Naive thymus-derived CD4-positive, alpha-beta T cell (primary cell): ENCODE measurements at regions of chr12 and their contacts with region 1.

Region 1: GRCh38 chr12:14365294-14366208 is at the start of gene ATF7IP:
- DNase-seq: peak; percentile 91 to 98 (median 97)
- ATAC-seq: peak; percentile 93
- H3K4me3 ChIP-seq: peak within 1 kb of the TSS; percentile 83
- H3K4me3 Mint-ChIP-seq: peak within 1 kb of the TSS; percentile 78 to 97 (median 88)
- H3K27ac ChIP-seq: peak within 1 kb of the TSS; percentile 84
- H3K27ac Mint-ChIP-seq: peak within 1 kb of the TSS; percentile 88 to 98 (median 94)
- H3K4me1 ChIP-seq: peaks cover 13 to 20% of the 10 kb centered on the region in 2 donors
- H3K4me1 Mint-ChIP-seq: peaks cover 21 to 52% (median 34%) of the 10 kb centered on the region in 7 donors
- H3K27me3 ChIP-seq: no peaks in the 10 kb centered on the region
- H3K27me3 Mint-ChIP-seq: peaks cover 0 to 2% (median 0%) of the 10 kb centered on the region in 5 donors
- total RNA-seq, gene ATF7IP: 113 to 181 (median 144) TPM

Region 2: DNA sequence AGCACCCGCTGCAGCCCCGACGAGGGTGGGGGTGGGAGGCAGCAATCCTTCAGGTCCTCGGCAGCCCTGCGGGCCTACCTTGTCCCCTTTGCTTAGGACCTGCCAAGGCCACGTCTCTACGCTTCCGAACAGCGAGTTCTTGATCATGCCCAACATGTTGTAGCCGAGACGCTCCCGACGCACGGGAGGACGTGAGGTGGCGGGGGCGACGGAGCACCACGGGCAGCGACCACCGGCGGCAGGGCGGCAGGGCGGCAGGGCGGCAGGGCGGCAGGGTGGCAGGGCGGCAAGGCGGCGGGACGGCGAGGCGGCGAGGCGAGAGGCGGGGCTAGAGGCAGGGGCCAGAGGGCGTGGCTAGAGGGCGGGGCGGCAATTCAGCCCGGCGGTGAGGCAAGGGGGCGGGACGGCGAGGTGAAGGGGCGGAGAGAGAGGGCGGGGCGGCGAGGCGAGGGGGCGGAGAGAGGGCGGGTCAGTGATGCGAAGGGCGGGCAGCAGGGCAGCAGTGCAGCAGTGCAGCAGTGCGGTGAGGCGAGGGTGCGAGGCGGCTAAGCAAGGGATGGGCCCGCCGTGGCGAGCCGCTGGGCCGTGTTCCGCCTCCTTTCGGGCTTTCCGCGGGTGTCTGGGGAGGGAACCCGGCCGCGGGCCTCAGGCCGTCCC is 1365.5 kb before region 1 on chr12 and contains the start of gene HEBP1:
- CTCF ChIA-PET with region 1: no interaction called
- POLR2A ChIA-PET with region 1: interaction called, 3 read pairs
- intact Hi-C with region 1: loop called in 1 of 2 experiments (anchors 2 kb)
- DNase-seq: peak; percentile 86 to 99 (median 93)
- ATAC-seq: peak; percentile 97
- H3K4me3 ChIP-seq: peak within 1 kb of the TSS; percentile 74
- H3K4me3 Mint-ChIP-seq: peak within 1 kb of the TSS; percentile 90 to 98 (median 95)
- H3K27ac ChIP-seq: peak within 1 kb of the TSS; percentile 83
- H3K27ac Mint-ChIP-seq: peak within 1 kb of the TSS; percentile 53 to 96 (median 90)
- H3K4me1 ChIP-seq: peaks cover 8 to 23% of the 10 kb centered on the region in 2 donors
- H3K4me1 Mint-ChIP-seq: peaks cover 30 to 45% (median 35%) of the 10 kb centered on the region in 7 donors
- H3K27me3 ChIP-seq: peaks cover 0 to 5% of the 10 kb centered on the region in 2 donors
- H3K27me3 Mint-ChIP-seq: peaks cover 0 to 31% (median 0%) of the 10 kb centered on the region in 5 donors
- total RNA-seq, gene HEBP1: 10.9 to 23.4 (median 13.6) TPM

Region 3: DNA sequence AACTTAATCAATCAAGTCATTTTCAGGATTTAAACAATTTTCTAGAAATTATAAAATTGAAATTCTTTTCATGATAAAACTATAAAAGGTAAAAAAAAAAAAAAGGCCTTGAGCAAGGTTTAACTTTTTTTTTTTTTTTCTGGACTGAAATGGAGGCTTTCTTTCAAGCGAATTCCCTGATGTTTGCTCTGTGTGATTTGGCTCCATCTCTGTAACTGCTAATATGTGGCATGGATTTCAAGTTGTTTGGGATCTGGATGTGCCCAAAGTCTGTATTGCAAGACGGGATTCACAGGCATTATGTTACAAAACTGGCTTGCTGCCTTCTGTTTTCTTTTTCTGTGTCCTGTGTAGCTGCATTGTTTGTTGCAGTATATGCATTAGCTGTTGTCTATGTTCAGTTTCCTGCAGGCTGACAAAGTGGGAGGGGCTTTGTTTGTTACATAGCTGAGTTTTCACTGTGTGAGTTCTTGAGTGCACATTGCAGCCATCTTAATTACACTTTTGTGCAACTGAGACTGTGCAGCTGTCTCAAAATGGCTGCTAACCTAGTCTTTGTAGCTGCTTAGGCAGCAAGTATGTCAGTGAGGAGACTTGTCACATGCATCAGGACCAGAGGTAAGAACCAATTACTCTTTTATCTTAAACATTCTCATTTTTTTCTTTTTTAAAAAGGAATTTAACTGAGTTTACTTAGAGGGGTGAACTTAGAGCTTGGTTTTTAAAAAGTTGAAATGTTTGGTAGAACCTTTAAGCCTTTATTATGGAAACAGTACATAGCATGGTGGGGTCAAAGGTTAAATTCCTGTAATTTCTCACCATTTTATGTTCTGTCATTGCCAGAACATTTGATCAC is 19.5 kb after region 1 on chr12:
- CTCF ChIA-PET with region 1: interaction called, 33 read pairs
- POLR2A ChIA-PET with region 1: interaction called, 98 read pairs
- intact Hi-C with region 1: loop called (anchors 1 kb)
- DNase-seq: peak in 8 of 9 donors; percentile 47 to 84 (median 77)
- ATAC-seq: peak; percentile 96
- H3K4me3 ChIP-seq: peak overlapping the region; percentile 18
- H3K4me3 Mint-ChIP-seq: peak overlapping the region; percentile 65 to 85 (median 76)
- H3K27ac ChIP-seq: peak overlapping the region; percentile 71
- H3K27ac Mint-ChIP-seq: peak overlapping the region; percentile 86 to 95 (median 93)
- H3K4me1 ChIP-seq: peaks cover 32 to 49% of the 10 kb centered on the region in 2 donors
- H3K4me1 Mint-ChIP-seq: peaks cover 31 to 79% (median 68%) of the 10 kb centered on the region in 7 donors
- H3K27me3 ChIP-seq: no peaks in the 10 kb centered on the region
- H3K27me3 Mint-ChIP-seq: no peaks in the 10 kb centered on the region

Region 4: GRCh38 chr12:14454098-14454907 is 88.8 kb after region 1 on chr12:
- CTCF ChIA-PET with region 1: interaction called, 11 read pairs
- POLR2A ChIA-PET with region 1: interaction called, 3 read pairs
- intact Hi-C with region 1: loop called (anchors 1 kb)
- DNase-seq: peak in 7 of 9 donors; percentile 5 to 33 (median 25)
- ATAC-seq: peak; percentile 86
- H3K4me3 ChIP-seq: no peak overlapping the region
- H3K4me3 Mint-ChIP-seq: peak overlapping the region in 5 of 10 donors; percentile 1 to 32 (median 3)
- H3K27ac ChIP-seq: no peak overlapping the region
- H3K27ac Mint-ChIP-seq: peak overlapping the region; percentile 9 to 83 (median 73)
- H3K4me1 ChIP-seq: peaks cover 17 to 18% of the 10 kb centered on the region in 2 donors
- H3K4me1 Mint-ChIP-seq: peaks cover 36 to 68% (median 65%) of the 10 kb centered on the region in 7 donors
- H3K27me3 ChIP-seq: no peaks in the 10 kb centered on the region
- H3K27me3 Mint-ChIP-seq: no peaks in the 10 kb centered on the region

Region 5: DNA sequence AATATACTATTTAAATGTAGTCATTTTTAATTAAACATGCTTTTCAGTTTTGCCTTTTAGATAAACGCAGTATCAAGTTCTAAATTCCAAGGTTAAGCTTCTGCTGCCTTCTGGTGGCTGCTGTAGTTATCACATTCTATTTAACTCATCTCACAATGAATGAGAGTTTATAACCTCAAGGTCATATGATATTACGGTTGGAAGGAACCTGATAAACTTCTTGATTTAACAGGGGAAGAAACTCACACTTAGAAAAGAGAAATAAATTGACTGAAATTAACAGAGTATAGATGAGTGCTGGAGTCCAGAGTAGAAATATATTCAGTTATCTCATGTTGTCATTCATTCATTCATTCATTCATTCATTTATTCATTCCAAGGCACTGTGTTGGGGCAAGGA is 299.0 kb after region 1 on chr12:
- CTCF ChIA-PET with region 1: no interaction called
- POLR2A ChIA-PET with region 1: no interaction called
- intact Hi-C with region 1: loop called (anchors 1 to 2 kb)
- DNase-seq: peak in 7 of 9 donors; percentile 29 to 64 (median 48)
- ATAC-seq: peak; percentile 83
- H3K4me3 ChIP-seq: no peak overlapping the region
- H3K4me3 Mint-ChIP-seq: no peak overlapping the region
- H3K27ac ChIP-seq: no peak overlapping the region
- H3K27ac Mint-ChIP-seq: no peak overlapping the region
- H3K4me1 ChIP-seq: no peaks in the 10 kb centered on the region
- H3K4me1 Mint-ChIP-seq: peaks cover 0 to 9% (median 8%) of the 10 kb centered on the region in 7 donors
- H3K27me3 ChIP-seq: peaks cover 0 to 4% of the 10 kb centered on the region in 2 donors
- H3K27me3 Mint-ChIP-seq: peaks cover 0 to 14% (median 5%) of the 10 kb centered on the region in 5 donors

Region 6: DNA sequence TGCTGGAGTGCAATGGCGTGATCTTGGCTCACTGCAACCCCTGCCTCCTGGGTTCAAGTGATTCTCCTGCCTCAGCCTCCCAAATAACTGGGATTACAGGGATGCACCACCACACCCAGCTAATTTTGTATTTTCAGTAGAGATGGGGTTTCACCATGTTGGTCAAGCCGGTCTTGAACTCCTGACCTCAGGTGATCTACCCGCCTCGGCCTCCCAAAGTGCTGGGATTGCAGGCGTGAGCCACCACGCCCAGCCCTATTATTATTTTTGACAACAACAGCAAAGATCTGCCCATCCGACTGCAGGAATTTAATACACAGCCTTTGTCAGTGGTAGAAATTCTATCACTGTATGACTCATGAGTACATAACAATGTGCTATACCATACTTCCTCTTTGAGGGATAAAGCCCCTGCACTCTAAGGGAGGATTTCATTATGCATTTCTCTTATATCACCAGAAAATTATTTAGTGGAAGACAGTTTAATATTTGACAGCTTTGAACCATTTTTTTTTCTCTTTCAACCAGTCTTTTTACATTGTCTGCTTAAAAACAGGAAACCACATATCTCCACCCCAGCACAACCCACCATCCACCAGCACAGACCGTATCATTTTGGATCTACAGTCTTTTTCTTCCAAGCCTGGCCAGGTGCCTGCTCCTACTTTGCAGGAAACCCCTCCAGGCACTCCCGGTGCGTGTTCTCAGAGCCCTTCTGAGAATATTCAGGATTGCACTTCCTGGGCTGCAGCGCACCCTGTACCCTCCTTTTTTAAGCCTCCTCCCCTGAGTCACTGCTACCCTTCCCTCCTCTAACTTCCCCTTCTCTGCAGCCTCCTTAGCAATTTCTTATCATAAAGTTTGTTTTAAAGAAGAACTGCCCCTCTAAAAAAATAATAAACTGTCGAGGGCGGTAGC is 595.3 kb after region 1 on chr12:
- CTCF ChIA-PET with region 1: no interaction called
- POLR2A ChIA-PET with region 1: interaction called, 3 read pairs
- intact Hi-C with region 1: loop called (anchors 1 kb)
- DNase-seq: peak in 7 of 9 donors; percentile 41 to 82 (median 77)
- ATAC-seq: peak; percentile 54
- H3K4me3 ChIP-seq: peak overlapping the region; percentile 84
- H3K4me3 Mint-ChIP-seq: peak overlapping the region; percentile 88 to 100 (median 97)
- H3K27ac ChIP-seq: peak overlapping the region; percentile 96
- H3K27ac Mint-ChIP-seq: peak overlapping the region; percentile 94 to 100 (median 97)
- H3K4me1 ChIP-seq: peaks cover 42 to 50% of the 10 kb centered on the region in 2 donors
- H3K4me1 Mint-ChIP-seq: peaks cover 42 to 68% (median 61%) of the 10 kb centered on the region in 7 donors
- H3K27me3 ChIP-seq: no peaks in the 10 kb centered on the region
- H3K27me3 Mint-ChIP-seq: peaks cover 0 to 2% (median 0%) of the 10 kb centered on the region in 5 donors

Region 7: GRCh38 chr12:15882118-15882971 is 1516.8 kb after region 1 on chr12 and contains the start of gene STRAP:
- CTCF ChIA-PET with region 1: no interaction called
- POLR2A ChIA-PET with region 1: interaction called, 6 read pairs
- intact Hi-C with region 1: loop called in 1 of 2 experiments (anchors 2 kb)
- DNase-seq: peak; percentile 94 to 98 (median 97)
- ATAC-seq: peak; percentile 97
- H3K4me3 ChIP-seq: peak within 1 kb of the TSS; percentile 97
- H3K4me3 Mint-ChIP-seq: peak within 1 kb of the TSS; percentile 91 to 100 (median 97)
- H3K27ac ChIP-seq: peak within 1 kb of the TSS; percentile 96
- H3K27ac Mint-ChIP-seq: peak within 1 kb of the TSS; percentile 98 to 100 (median 99)
- H3K4me1 ChIP-seq: peaks cover 22 to 32% of the 10 kb centered on the region in 2 donors
- H3K4me1 Mint-ChIP-seq: peaks cover 35 to 66% (median 60%) of the 10 kb centered on the region in 7 donors
- H3K27me3 ChIP-seq: no peaks in the 10 kb centered on the region
- H3K27me3 Mint-ChIP-seq: no peaks in the 10 kb centered on the region
- total RNA-seq, gene STRAP: 42.2 to 97.2 (median 70.9) TPM